CD8-positive, alpha-beta T cell (primary cell): ENCODE measurements at regions of chr9 and their contacts with region 1.

Region 1: GRCh38 chr9:27554712-27555111 is 18.6 kb downstream of the C9orf72 start:
- DNase-seq: no peak
- ATAC-seq: no peak
- H3K4me3 ChIP-seq: no peak overlapping the region
- H3K4me3 Mint-ChIP-seq: no peak overlapping the region
- H3K27ac ChIP-seq: no peak overlapping the region
- H3K27ac Mint-ChIP-seq: no peak overlapping the region
- H3K4me1 ChIP-seq: no peaks in the 10 kb centered on the region
- H3K4me1 Mint-ChIP-seq: no peaks in the 10 kb centered on the region
- H3K27me3 ChIP-seq: no peaks in the 10 kb centered on the region
- H3K27me3 Mint-ChIP-seq: no peaks in the 10 kb centered on the region
- CTCF ChIP-seq: no peak

Region 2: GRCh38 chr9:27537027-27537435 is 17.7 kb before region 1 on chr9:
- CTCF ChIA-PET with region 1: no interaction called
- POLR2A ChIA-PET with region 1: no interaction called
- intact Hi-C with region 1: no loop called
- DNase-seq: no peak
- ATAC-seq: no peak
- H3K4me3 ChIP-seq: no peak overlapping the region
- H3K4me3 Mint-ChIP-seq: no peak overlapping the region
- H3K27ac ChIP-seq: no peak overlapping the region
- H3K27ac Mint-ChIP-seq: no peak overlapping the region
- H3K4me1 ChIP-seq: no peaks in the 10 kb centered on the region
- H3K4me1 Mint-ChIP-seq: no peaks in the 10 kb centered on the region
- H3K27me3 ChIP-seq: no peaks in the 10 kb centered on the region
- H3K27me3 Mint-ChIP-seq: no peaks in the 10 kb centered on the region
- CTCF ChIP-seq: no peak

Region 3: DNA sequence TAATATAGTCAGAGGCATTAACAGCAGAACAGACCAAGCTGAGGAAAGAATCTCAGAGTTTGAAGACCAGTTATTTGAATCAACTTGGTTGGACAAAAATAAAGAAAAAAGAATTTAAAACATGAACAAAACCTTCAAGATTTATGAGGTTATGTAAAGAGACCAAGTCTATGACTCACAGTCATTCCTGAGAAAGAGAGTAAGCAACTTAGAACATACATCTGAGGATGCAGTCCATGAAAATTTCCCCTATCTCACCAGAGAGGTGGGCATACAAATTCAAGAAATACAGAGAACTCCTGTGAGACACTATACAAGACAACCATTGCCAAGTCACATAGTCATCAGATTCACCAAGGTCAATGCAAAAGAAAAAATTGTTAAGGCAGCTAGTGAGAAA is 35.9 kb after region 1 on chr9:
- CTCF ChIA-PET with region 1: no interaction called
- POLR2A ChIA-PET with region 1: no interaction called
- intact Hi-C with region 1: loop called in 1 of 2 experiments (anchors 5 kb)
- DNase-seq: no peak
- ATAC-seq: no peak
- H3K4me3 ChIP-seq: no peak overlapping the region
- H3K4me3 Mint-ChIP-seq: no peak overlapping the region
- H3K27ac ChIP-seq: no peak overlapping the region
- H3K27ac Mint-ChIP-seq: no peak overlapping the region
- H3K4me1 ChIP-seq: no peaks in the 10 kb centered on the region
- H3K4me1 Mint-ChIP-seq: no peaks in the 10 kb centered on the region
- H3K27me3 ChIP-seq: peaks cover 6 to 12% of the 10 kb centered on the region in 2 experiments
- H3K27me3 Mint-ChIP-seq: peaks cover 32% of the 10 kb centered on the region
- CTCF ChIP-seq: no peak